ENCODE measurements at regions of chr6 and their contacts with region 1.

Region 1: GRCh38 chr6:21593412-21593926 is at the start of gene SOX4:
- DNase-seq: peak; percentile 27 to 80 (median 65)
- ATAC-seq: peak; percentile 78
- H3K4me3 ChIP-seq: peak within 1 kb of the TSS; percentile 59
- H3K4me3 Mint-ChIP-seq: peak within 1 kb of the TSS in 6 of 10 donors; percentile 89 to 93 (median 92)
- H3K27ac ChIP-seq: peak within 1 kb of the TSS; percentile 41
- H3K27ac Mint-ChIP-seq: peak within 1 kb of the TSS in 6 of 9 donors; percentile 43 to 87 (median 80)
- H3K4me1 ChIP-seq: peaks cover 18 to 21% of the 10 kb centered on the region in 2 donors
- H3K4me1 Mint-ChIP-seq: peaks cover 12 to 31% (median 27%) of the 10 kb centered on the region in 7 donors
- H3K27me3 ChIP-seq: peaks cover 10 to 28% of the 10 kb centered on the region in 2 donors
- H3K27me3 Mint-ChIP-seq: peaks cover 40 to 51% (median 45%) of the 10 kb centered on the region in 5 donors
- total RNA-seq, gene SOX4: 0.73 to 11.0 (median 1.4) TPM

Region 2: DNA sequence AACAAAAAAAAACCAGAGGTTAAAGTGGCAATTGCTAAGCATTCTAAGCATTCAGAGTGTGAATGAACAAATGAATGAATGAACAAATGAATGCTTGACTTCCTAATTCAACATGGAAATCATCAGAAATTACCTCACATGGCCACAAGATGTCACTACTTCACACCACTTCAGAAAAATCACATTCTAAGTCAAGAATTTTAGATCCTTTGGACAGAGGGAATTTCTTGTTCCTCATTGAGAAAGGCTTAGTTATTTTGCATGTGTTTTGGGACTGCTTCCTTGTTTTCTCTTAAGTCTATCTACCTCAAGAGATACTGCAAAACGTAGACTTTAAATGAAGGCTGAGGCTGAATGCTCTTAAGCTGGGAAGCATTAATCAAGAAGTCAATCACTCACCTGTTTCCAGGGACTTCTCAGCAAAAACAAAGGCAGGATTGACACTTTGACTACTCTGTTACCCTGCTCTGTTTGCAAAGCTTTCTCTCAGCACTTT is 1501.3 kb before region 1 on chr6:
- CTCF ChIA-PET with region 1: no interaction called
- POLR2A ChIA-PET with region 1: no interaction called
- intact Hi-C with region 1: loop called (anchors 1 to 2 kb)
- DNase-seq: peak in 5 of 9 donors; percentile 10 to 23 (median 14)
- ATAC-seq: no peak
- H3K4me3 ChIP-seq: no peak overlapping the region
- H3K4me3 Mint-ChIP-seq: no peak overlapping the region
- H3K27ac ChIP-seq: no peak overlapping the region
- H3K27ac Mint-ChIP-seq: no peak overlapping the region
- H3K4me1 ChIP-seq: no peaks in the 10 kb centered on the region
- H3K4me1 Mint-ChIP-seq: no peaks in the 10 kb centered on the region
- H3K27me3 ChIP-seq: no peaks in the 10 kb centered on the region
- H3K27me3 Mint-ChIP-seq: no peaks in the 10 kb centered on the region

Region 3: DNA sequence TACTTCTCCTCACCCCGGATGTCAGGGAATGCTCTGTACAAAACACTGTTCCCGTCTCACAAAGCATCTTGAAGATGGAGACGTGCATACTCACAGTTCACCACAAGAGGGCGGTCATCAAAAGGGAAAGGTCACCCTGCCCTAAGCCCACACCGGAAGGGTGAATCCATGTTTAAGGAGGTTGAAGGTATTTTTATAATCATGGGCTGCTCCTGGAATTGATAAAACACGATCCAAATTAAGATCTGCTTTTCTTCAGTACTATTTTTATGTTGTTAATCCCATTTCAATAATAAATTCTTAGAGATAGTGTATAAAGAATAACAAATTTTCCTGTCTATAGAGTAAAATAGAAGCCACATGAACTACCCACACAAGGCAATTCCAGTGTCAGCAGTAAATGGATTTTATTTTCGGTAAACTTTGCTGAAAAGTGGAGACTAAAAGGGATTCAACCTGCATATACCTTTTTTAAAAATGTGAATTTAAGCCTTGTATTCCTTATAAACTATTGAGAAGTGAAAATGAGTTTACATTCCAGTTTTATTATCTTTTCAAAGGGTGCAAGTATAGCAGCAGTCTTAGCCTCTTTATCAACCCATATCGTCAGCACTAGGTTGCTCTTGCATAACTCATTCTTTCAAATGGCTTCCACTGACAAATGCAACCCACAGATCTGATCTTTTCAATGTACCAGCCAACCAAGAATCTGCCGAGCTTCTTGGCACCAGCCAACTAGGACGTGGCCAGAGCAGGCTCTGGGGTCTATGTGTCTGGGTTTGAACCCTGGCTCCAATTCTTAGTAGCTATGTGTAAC is 1301.5 kb before region 1 on chr6:
- CTCF ChIA-PET with region 1: no interaction called
- POLR2A ChIA-PET with region 1: no interaction called
- intact Hi-C with region 1: loop called (anchors 1 to 2 kb)
- DNase-seq: peak; percentile 36 to 72 (median 62)
- ATAC-seq: peak; percentile 94
- H3K4me3 ChIP-seq: no peak overlapping the region
- H3K4me3 Mint-ChIP-seq: peak overlapping the region in 5 of 10 donors; percentile 1 to 54 (median 44)
- H3K27ac ChIP-seq: no peak overlapping the region
- H3K27ac Mint-ChIP-seq: peak overlapping the region in 4 of 9 donors; percentile 3 to 44 (median 22)
- H3K4me1 ChIP-seq: peaks cover 8 to 15% of the 10 kb centered on the region in 2 donors
- H3K4me1 Mint-ChIP-seq: peaks cover 6 to 34% (median 25%) of the 10 kb centered on the region in 7 donors
- H3K27me3 ChIP-seq: no peaks in the 10 kb centered on the region
- H3K27me3 Mint-ChIP-seq: peaks cover 0 to 6% (median 0%) of the 10 kb centered on the region in 5 donors

Region 4: DNA sequence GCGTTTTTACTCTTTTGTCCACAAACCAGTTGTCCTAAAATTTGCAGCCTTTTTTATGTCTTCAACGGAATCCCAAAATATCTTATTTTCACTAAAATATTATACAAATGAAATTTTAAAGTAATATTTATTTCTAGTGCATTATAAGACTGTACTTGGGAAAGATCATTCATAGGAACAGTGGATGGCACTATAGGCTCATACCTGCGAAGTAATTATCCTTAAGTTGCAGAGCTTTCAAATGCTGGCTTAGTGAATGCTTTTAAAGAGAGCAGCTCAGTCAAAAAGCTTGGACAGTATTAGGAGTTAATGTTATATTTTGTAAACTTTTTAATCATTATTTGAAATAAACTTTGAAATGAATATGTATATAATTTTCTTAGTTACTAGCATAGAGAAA is 804.3 kb before region 1 on chr6:
- CTCF ChIA-PET with region 1: no interaction called
- POLR2A ChIA-PET with region 1: no interaction called
- intact Hi-C with region 1: loop called (anchors 2 to 5 kb)
- DNase-seq: no peak
- ATAC-seq: no peak
- H3K4me3 ChIP-seq: no peak overlapping the region
- H3K4me3 Mint-ChIP-seq: no peak overlapping the region
- H3K27ac ChIP-seq: no peak overlapping the region
- H3K27ac Mint-ChIP-seq: no peak overlapping the region
- H3K4me1 ChIP-seq: no peaks in the 10 kb centered on the region
- H3K4me1 Mint-ChIP-seq: peaks cover 0 to 3% (median 0%) of the 10 kb centered on the region in 7 donors
- H3K27me3 ChIP-seq: no peaks in the 10 kb centered on the region
- H3K27me3 Mint-ChIP-seq: no peaks in the 10 kb centered on the region

Region 5: GRCh38 chr6:21527731-21528130 is 65.7 kb before region 1 on chr6:
- CTCF ChIA-PET with region 1: no interaction called
- POLR2A ChIA-PET with region 1: no interaction called
- intact Hi-C with region 1: loop called in 1 of 2 experiments (anchors 5 kb)
- DNase-seq: peak in 2 of 9 donors; percentile 1 to 3
- ATAC-seq: no peak
- H3K4me3 ChIP-seq: no peak overlapping the region
- H3K4me3 Mint-ChIP-seq: no peak overlapping the region
- H3K27ac ChIP-seq: no peak overlapping the region
- H3K27ac Mint-ChIP-seq: no peak overlapping the region
- H3K4me1 ChIP-seq: no peaks in the 10 kb centered on the region
- H3K4me1 Mint-ChIP-seq: no peaks in the 10 kb centered on the region
- H3K27me3 ChIP-seq: no peaks in the 10 kb centered on the region
- H3K27me3 Mint-ChIP-seq: peaks cover 0 to 9% (median 0%) of the 10 kb centered on the region in 5 donors

Region 6: GRCh38 chr6:21928827-21929226 is 335.4 kb after region 1 on chr6:
- CTCF ChIA-PET with region 1: no interaction called
- POLR2A ChIA-PET with region 1: no interaction called
- intact Hi-C with region 1: loop called in 1 of 2 experiments (anchors 5 kb)
- DNase-seq: no peak
- ATAC-seq: no peak
- H3K4me3 ChIP-seq: no peak overlapping the region
- H3K4me3 Mint-ChIP-seq: no peak overlapping the region
- H3K27ac ChIP-seq: no peak overlapping the region
- H3K27ac Mint-ChIP-seq: peak overlapping the region in 1 of 9 donors; percentile 80
- H3K4me1 ChIP-seq: no peaks in the 10 kb centered on the region
- H3K4me1 Mint-ChIP-seq: peaks cover 0 to 33% (median 9%) of the 10 kb centered on the region in 7 donors
- H3K27me3 ChIP-seq: no peaks in the 10 kb centered on the region
- H3K27me3 Mint-ChIP-seq: peaks cover 0 to 3% (median 0%) of the 10 kb centered on the region in 5 donors

Region 7: GRCh38 chr6:22145823-22146677 is 552.6 kb after region 1 on chr6:
- CTCF ChIA-PET with region 1: no interaction called
- POLR2A ChIA-PET with region 1: interaction called, 7 read pairs
- intact Hi-C with region 1: loop called (anchors 2 to 5 kb)
- DNase-seq: peak in 7 of 9 donors; percentile 5 to 50 (median 22)
- ATAC-seq: peak; percentile 16
- H3K4me3 ChIP-seq: no peak overlapping the region
- H3K4me3 Mint-ChIP-seq: peak overlapping the region in 9 of 10 donors; percentile 72 to 90 (median 81)
- H3K27ac ChIP-seq: peak overlapping the region; percentile 61
- H3K27ac Mint-ChIP-seq: peak overlapping the region in 5 of 9 donors; percentile 49 to 95 (median 91)
- H3K4me1 ChIP-seq: peaks cover 0 to 5% of the 10 kb centered on the region in 2 donors
- H3K4me1 Mint-ChIP-seq: peaks cover 5 to 58% (median 24%) of the 10 kb centered on the region in 7 donors
- H3K27me3 ChIP-seq: no peaks in the 10 kb centered on the region
- H3K27me3 Mint-ChIP-seq: peaks cover 28 to 51% (median 34%) of the 10 kb centered on the region in 5 donors